ENCODE measurements at regions of chr7 and their contacts with region 1.

Region 1: GRCh38 chr7:140326116-140326928 is 72.0 kb downstream of the SLC37A3 start:
- DNase-seq: peak; percentile 63
- ATAC-seq: peak; percentile 93
- H3K4me3 ChIP-seq: peak overlapping the region; percentile 33 to 58 (median 49)
- H3K27ac ChIP-seq: no peak overlapping the region
- H3K4me1 ChIP-seq: peaks cover 27% of the 10 kb centered on the region
- H3K27me3 ChIP-seq: no peaks in the 10 kb centered on the region
- CTCF ChIP-seq: peak; percentile 93
- EP300 ChIP-seq: no peak
- POLR2A ChIP-seq: no peak
- RAD21 ChIP-seq: peak; percentile 91

Region 2: DNA sequence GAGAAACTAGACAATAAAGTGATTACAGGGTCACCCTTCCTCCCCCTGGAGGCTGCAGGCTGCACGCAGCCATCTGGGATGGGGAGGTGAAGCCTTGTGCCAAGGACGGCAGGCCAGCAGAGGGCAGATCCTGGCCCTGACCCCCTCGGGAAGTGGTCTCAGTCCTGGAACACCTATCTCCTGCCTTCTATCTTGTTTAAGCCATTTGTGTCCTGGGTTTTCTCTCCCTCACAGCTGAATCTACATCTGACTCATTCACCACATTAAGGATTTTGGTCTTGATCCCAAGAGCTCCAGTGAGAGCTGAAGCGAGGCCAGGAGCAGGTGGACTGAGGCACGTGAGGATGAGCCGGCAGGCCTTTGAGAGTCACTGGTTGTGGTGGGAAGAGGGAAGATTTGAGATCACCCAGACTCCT is 247.2 kb before region 1 on chr7:
- CTCF ChIA-PET with region 1: interaction called, 9 read pairs
- POLR2A ChIA-PET with region 1: no interaction called
- in situ Hi-C with region 1: loop called (anchors 25 kb)
- intact Hi-C with region 1: loop called (anchors 1 kb)
- DNase-seq: peak; percentile 57
- ATAC-seq: peak; percentile 87
- H3K4me3 ChIP-seq: no peak overlapping the region
- H3K27ac ChIP-seq: no peak overlapping the region
- H3K4me1 ChIP-seq: peaks cover 43% of the 10 kb centered on the region
- H3K27me3 ChIP-seq: peaks cover 0 to 5% of the 10 kb centered on the region in 2 experiments; a peak in 1 of 5 replicates
- CTCF ChIP-seq: peak; percentile 85
- EP300 ChIP-seq: no peak
- POLR2A ChIP-seq: no peak
- RAD21 ChIP-seq: peak; percentile 71

Region 3: GRCh38 chr7:140165422-140165821 is 160.9 kb before region 1 on chr7:
- CTCF ChIA-PET with region 1: no interaction called
- POLR2A ChIA-PET with region 1: no interaction called
- in situ Hi-C with region 1: loop called (anchors 10 kb)
- intact Hi-C with region 1: no loop called
- DNase-seq: no peak
- ATAC-seq: peak; percentile 36; the same call in 1 of the 3 replicates
- H3K4me3 ChIP-seq: no peak overlapping the region
- H3K27ac ChIP-seq: no peak overlapping the region
- H3K4me1 ChIP-seq: peaks cover 73% of the 10 kb centered on the region
- H3K27me3 ChIP-seq: no peaks in the 10 kb centered on the region
- CTCF ChIP-seq: no peak
- EP300 ChIP-seq: no peak
- POLR2A ChIP-seq: no peak
- RAD21 ChIP-seq: no peak

Region 4: GRCh38 chr7:140249036-140249806 is 77.1 kb before region 1 on chr7:
- CTCF ChIA-PET with region 1: no interaction called
- POLR2A ChIA-PET with region 1: interaction called, 4 read pairs
- in situ Hi-C with region 1: no loop called
- intact Hi-C with region 1: loop called (anchors 1 kb)
- DNase-seq: peak; percentile 95
- ATAC-seq: peak; percentile 59
- H3K4me3 ChIP-seq: peak overlapping the region in 1 of 3 experiments; percentile 9; a peak in 1 of 6 replicates
- H3K27ac ChIP-seq: peak overlapping the region; percentile 68
- H3K4me1 ChIP-seq: peaks cover 95% of the 10 kb centered on the region
- H3K27me3 ChIP-seq: no peaks in the 10 kb centered on the region
- CTCF ChIP-seq: no peak
- EP300 ChIP-seq: peak; percentile 70 to 94; a peak in 3 of 4 replicates
- POLR2A ChIP-seq: no peak
- RAD21 ChIP-seq: no peak